Activated CD4-positive, alpha-beta memory T cell treated with anti-CD3 and anti-CD28 coated beads for 36 hours (primary cell): ENCODE measurements at regions of chr5 and their contacts with region 1.

Region 1: DNA sequence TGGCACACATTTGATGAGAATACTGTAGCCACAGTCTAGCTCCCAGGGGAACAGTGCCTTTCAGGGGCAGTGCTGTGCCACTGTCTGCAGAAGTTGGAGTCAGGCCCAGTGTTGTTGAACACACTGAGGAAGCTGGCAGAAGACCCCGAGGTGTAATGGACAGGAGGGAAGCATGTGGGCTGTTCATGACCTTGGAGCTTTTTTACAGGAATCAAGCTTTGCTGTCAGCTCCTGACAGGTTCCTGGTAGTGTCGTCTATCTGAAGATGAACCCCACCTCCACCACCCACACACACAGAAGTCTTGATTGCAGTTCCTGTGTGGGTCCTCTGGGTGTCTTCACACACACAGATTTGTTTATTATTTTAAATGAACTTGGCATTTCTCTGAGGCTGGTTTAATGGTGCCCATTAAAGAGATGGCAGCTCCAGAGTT is 40.3 kb upstream of the TNFAIP8 start:
- DNase-seq: peak; percentile 78
- H3K4me3 Mint-ChIP-seq: peak overlapping the region; percentile 30
- H3K27ac Mint-ChIP-seq: peak overlapping the region; percentile 89
- H3K4me1 Mint-ChIP-seq: peaks cover 93% of the 10 kb centered on the region
- H3K27me3 Mint-ChIP-seq: no peaks in the 10 kb centered on the region

Region 2: GRCh38 chr5:119063579-119064379 is 251.8 kb before region 1 on chr5:
- CTCF ChIA-PET with region 1: no interaction called
- POLR2A ChIA-PET with region 1: no interaction called
- intact Hi-C with region 1: no loop called
- DNase-seq: peak; percentile 25
- H3K4me3 Mint-ChIP-seq: no peak overlapping the region
- H3K27ac Mint-ChIP-seq: peak overlapping the region; percentile 20
- H3K4me1 Mint-ChIP-seq: peaks cover 12% of the 10 kb centered on the region
- H3K27me3 Mint-ChIP-seq: no peaks in the 10 kb centered on the region

Region 3: DNA sequence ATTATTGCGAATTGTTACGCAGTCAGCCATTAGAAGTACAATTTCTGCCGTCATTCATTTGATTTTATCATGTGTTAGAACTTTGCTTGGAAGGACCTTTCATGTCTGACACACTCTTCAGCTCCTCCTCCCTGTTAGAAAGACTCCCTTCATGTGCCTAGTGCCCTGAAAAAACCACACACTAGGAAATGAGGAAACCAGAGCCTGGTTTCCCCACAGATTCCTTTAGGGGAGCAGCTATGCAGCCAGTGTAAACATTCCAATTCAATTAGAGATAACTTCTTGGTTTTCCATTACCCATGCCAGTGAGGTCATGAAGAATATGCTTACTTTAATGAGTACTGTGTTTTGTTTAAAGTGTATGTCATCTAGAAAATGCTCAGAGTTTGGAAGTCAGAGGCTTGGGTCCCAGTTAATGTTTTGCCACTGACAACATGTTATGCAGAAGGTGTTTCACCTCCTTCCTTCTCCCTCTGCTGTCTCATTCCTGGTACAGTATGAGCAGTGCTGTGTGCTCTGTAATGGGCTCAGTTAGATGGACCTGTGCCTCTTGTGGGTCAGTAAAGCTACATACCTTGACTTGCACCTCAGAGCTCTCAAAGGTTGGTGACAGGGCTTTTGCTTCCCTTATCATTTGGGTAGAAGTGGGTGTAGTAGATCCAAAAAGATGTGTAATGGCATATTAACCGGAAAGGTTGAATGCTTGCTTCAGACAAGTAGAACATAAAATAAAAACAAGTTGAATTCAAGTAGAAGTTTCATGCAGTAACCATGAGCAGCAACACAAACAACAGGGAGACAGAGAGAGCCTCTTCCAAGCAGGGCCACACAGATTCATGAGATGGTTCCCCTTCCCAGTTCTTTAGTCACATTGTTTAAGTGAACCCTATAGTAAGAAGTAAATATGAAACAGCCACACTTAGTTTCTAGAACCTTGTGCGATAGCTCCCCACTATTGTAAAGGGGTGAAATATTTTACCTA is 12.3 kb before region 1 on chr5:
- CTCF ChIA-PET with region 1: interaction called, 10 read pairs
- POLR2A ChIA-PET with region 1: interaction called, 3 read pairs
- intact Hi-C with region 1: loop called (anchors 1 kb)
- DNase-seq: no peak
- H3K4me3 Mint-ChIP-seq: peak overlapping the region; percentile 17
- H3K27ac Mint-ChIP-seq: peak overlapping the region; percentile 90
- H3K4me1 Mint-ChIP-seq: peaks cover 93% of the 10 kb centered on the region
- H3K27me3 Mint-ChIP-seq: no peaks in the 10 kb centered on the region

Region 4: DNA sequence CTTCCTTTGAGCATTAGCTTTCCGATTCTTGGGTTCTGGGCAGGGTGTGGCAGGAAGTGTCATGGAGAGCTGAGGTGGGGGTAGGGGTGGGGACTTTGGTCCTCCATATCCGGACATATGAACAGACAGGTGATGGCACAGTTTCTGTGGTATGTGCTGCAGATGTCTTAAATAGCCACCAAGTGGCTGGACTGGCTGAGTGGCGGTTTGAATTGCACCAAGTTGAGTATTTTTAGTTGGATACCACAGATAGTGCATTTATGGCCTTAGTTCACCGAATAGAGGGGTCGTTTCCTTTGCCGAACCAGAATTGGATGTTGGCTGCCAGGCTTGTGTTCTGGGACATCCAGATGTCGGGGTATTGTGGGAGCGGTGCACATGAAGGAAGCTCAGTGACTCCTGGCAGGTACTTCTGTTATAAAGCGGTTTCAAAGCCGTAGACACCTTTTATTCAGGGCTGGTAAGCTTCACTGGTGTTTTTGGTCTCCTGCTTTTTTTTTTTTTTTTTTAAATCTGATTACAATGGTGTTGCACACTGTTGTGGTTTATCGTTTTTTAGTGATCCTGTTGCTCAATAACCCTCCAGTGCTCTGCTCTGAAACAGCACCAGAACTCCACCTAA is 25.2 kb after region 1 on chr5:
- CTCF ChIA-PET with region 1: interaction called, 45 read pairs
- POLR2A ChIA-PET with region 1: interaction called, 7 read pairs
- intact Hi-C with region 1: loop called (anchors 1 kb)
- DNase-seq: peak; percentile 78
- H3K4me3 Mint-ChIP-seq: peak overlapping the region; percentile 66
- H3K27ac Mint-ChIP-seq: peak overlapping the region; percentile 93
- H3K4me1 Mint-ChIP-seq: peaks cover 94% of the 10 kb centered on the region
- H3K27me3 Mint-ChIP-seq: no peaks in the 10 kb centered on the region

Region 5: GRCh38 chr5:119360905-119361593 is 45.5 kb after region 1 on chr5:
- CTCF ChIA-PET with region 1: interaction called, 12 read pairs
- POLR2A ChIA-PET with region 1: interaction called, 3 read pairs
- intact Hi-C with region 1: no loop called
- DNase-seq: no peak
- H3K4me3 Mint-ChIP-seq: peak overlapping the region; percentile 99
- H3K27ac Mint-ChIP-seq: peak overlapping the region; percentile 90
- H3K4me1 Mint-ChIP-seq: peaks cover 80% of the 10 kb centered on the region
- H3K27me3 Mint-ChIP-seq: no peaks in the 10 kb centered on the region